ENCODE measurements at regions of chr3 and their contacts with region 1.

Region 1: DNA sequence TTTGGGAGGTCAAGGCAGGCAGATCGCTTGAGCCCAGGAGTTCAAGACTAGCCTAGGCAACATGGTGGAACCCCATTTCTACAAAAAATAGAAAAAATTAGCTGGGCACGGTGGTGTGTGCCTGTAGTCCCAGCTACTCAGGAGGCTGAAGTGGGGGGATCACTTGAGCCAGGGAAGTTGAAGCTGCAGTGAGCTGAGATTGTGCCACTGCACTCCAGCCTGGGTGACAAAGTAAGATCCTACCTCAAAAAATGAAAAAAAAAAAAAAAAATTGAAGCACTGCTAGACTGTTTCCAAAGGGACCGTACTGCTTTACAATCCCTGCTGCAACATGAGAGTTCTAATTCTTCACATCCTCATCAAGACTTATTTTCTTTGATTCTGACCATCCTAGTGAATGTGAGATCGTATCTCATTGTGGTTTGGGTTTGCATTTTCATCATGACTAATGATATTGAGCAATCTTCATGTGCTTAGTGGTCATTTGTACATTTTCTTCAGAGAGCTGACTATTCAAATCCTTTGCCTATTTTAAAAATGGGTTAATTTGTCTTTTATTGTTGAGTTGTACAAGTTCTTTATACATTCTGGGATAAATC is 10.8 kb downstream of the CMTM8 start:
- DNase-seq: no peak
- ATAC-seq: peak in 1 of 4 donors; percentile 41
- H3K4me3 ChIP-seq: no peak overlapping the region
- H3K27ac ChIP-seq: no peak overlapping the region
- H3K4me1 ChIP-seq: peaks cover 0 to 8% (median 0%) of the 10 kb centered on the region in 12 donors
- H3K27me3 ChIP-seq: no peaks in the 10 kb centered on the region
- CTCF ChIP-seq: no peak
- POLR2A ChIP-seq: no peak

Region 2: DNA sequence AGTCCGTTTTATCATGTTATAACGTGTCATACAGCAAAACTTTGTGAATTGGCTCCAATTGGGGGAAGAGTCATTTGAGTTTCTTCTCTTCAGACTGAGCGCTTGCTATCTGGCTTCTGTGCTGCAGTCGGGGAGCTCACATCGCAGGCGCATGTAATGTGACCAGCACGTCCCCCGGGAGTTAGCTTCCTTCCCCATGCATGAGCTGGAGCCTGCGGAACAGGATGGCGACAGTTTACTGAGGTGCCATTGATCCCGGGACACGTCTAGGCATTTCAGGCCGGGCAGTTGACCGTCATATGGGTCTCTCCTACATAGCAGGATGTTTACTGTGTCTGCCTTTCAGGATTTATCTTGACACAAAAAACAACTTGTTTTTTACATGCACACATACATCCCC is 34.0 kb after region 1 on chr3:
- intact Hi-C with region 1: loop called in 2 of 10 experiments (anchors 5 kb)
- DNase-seq: peak; percentile 65 to 79 (median 78)
- ATAC-seq: peak in 3 of 4 donors; percentile 67 to 90 (median 71)
- H3K4me3 ChIP-seq: no peak overlapping the region
- H3K27ac ChIP-seq: peak overlapping the region in 10 of 12 donors; percentile 0 to 61 (median 32)
- H3K4me1 ChIP-seq: peaks cover 0 to 42% (median 10%) of the 10 kb centered on the region in 12 donors
- H3K27me3 ChIP-seq: no peaks in the 10 kb centered on the region
- CTCF ChIP-seq: no peak
- POLR2A ChIP-seq: no peak

Region 3: GRCh38 chr3:32401556-32402081 is 152.3 kb after region 1 on chr3:
- intact Hi-C with region 1: no loop called
- DNase-seq: peak; percentile 85 to 94 (median 86)
- ATAC-seq: peak; percentile 70 to 94 (median 90)
- H3K4me3 ChIP-seq: peak overlapping the region; percentile 2 to 61 (median 50)
- H3K27ac ChIP-seq: peak overlapping the region; percentile 70 to 97 (median 86)
- H3K4me1 ChIP-seq: peaks cover 0 to 93% (median 27%) of the 10 kb centered on the region in 12 donors
- H3K27me3 ChIP-seq: no peaks in the 10 kb centered on the region
- CTCF ChIP-seq: no peak
- POLR2A ChIP-seq: peak in 1 of 2 donors; percentile 25